ENCODE measurements at regions of chr1 and their contacts with region 1.

Region 1: DNA sequence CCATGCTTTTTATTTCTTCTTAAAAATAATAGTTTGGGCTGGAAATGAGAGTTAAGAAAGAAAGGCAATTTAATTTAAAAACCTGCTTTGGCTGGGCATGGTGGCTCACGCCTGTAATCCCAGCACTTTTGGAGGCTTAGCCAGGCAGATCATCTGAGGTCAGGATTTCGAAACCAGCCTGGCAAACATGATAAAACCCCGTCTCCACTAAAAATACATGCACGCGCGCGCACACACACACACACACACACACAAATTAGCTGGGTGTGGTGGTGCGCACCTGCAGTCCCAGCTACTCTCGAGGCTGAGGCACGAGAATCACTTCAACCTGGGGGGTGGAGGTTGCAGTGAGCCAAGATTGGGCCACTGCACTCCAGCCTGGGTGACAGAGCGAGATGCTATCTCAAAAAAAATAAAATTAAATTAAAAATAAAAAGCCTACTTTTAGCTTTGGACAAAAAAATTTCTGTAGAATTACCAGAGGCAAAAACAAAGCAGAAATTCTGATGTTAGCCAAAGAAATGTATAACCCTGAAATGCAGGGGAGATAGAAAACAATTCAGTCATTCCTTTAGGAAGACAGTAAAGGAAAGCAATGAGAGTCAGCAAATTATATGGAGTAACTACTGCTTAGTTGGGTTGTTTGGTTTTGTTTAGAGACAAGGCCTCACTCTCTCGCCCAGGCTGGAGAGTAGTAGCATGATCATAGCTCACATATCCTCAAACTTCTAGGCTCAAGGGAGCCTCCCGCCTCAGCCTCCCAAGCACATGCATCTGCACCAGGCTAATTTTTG is 15.7 kb upstream of the IPP start:
- DNase-seq: no peak
- H3K4me3 ChIP-seq: no peak overlapping the region
- H3K4me3 Mint-ChIP-seq: no peak overlapping the region
- H3K27ac ChIP-seq: no peak overlapping the region
- H3K27ac Mint-ChIP-seq: no peak overlapping the region
- H3K4me1 ChIP-seq: no peaks in the 10 kb centered on the region
- H3K4me1 Mint-ChIP-seq: no peaks in the 10 kb centered on the region
- H3K27me3 ChIP-seq: no peaks in the 10 kb centered on the region
- H3K27me3 Mint-ChIP-seq: peaks cover 4 to 5% of the 10 kb centered on the region in 2 donors

Region 2: GRCh38 chr1:45730475-45731339 is 35.5 kb before region 1 on chr1:
- CTCF ChIA-PET with region 1: no interaction called
- POLR2A ChIA-PET with region 1: interaction called, 15 read pairs
- DNase-seq: no peak
- H3K4me3 ChIP-seq: no peak overlapping the region
- H3K4me3 Mint-ChIP-seq: no peak overlapping the region
- H3K27ac ChIP-seq: no peak overlapping the region
- H3K27ac Mint-ChIP-seq: peak overlapping the region in 3 of 8 donors; percentile 8 to 64 (median 47)
- H3K4me1 ChIP-seq: no peaks in the 10 kb centered on the region
- H3K4me1 Mint-ChIP-seq: peaks cover 11 to 14% (median 11%) of the 10 kb centered on the region in 3 donors
- H3K27me3 ChIP-seq: no peaks in the 10 kb centered on the region
- H3K27me3 Mint-ChIP-seq: no peaks in the 10 kb centered on the region

Region 3: GRCh38 chr1:45750298-45751038 is 15.7 kb before region 1 on chr1 and contains the start of gene IPP:
- CTCF ChIA-PET with region 1: no interaction called
- POLR2A ChIA-PET with region 1: no interaction called
- DNase-seq: peak; percentile 86 to 94 (median 90)
- H3K4me3 ChIP-seq: peak within 1 kb of the TSS; percentile 61
- H3K4me3 Mint-ChIP-seq: peak within 1 kb of the TSS; percentile 96 to 99 (median 98)
- H3K27ac ChIP-seq: peak within 1 kb of the TSS; percentile 81
- H3K27ac Mint-ChIP-seq: peak within 1 kb of the TSS; percentile 99 to 100 (median 100)
- H3K4me1 ChIP-seq: peaks cover 13% of the 10 kb centered on the region
- H3K4me1 Mint-ChIP-seq: peaks cover 25 to 47% (median 37%) of the 10 kb centered on the region in 3 donors
- H3K27me3 ChIP-seq: no peaks in the 10 kb centered on the region
- H3K27me3 Mint-ChIP-seq: no peaks in the 10 kb centered on the region
- total RNA-seq, gene IPP: 18.3 to 19.4 TPM

Measured in CD8-positive, alpha-beta memory T cell (primary cell).